Left cardiac atrium (tissue), 4 donors: ENCODE measurements at regions of chr10 and their contacts with region 1.

Region 1: GRCh38 chr10:4656576-4657182 is 169.3 kb upstream of the AKR1E2 start:
- DNase-seq: peak; percentile 50
- ATAC-seq: peak; percentile 37 to 79

Region 2: GRCh38 chr10:3785257-3785850 is 871.3 kb before region 1 on chr10:
- intact Hi-C with region 1: loop called (anchors 10 kb)
- DNase-seq: peak; percentile 99
- ATAC-seq: peak; percentile 82 to 85

Region 3: GRCh38 chr10:4081685-4082111 is 575.0 kb before region 1 on chr10:
- intact Hi-C with region 1: loop called in 1 of 2 experiments (anchors 10 kb)
- DNase-seq: peak; percentile 44
- ATAC-seq: peak; percentile 49 to 50

Region 4: DNA sequence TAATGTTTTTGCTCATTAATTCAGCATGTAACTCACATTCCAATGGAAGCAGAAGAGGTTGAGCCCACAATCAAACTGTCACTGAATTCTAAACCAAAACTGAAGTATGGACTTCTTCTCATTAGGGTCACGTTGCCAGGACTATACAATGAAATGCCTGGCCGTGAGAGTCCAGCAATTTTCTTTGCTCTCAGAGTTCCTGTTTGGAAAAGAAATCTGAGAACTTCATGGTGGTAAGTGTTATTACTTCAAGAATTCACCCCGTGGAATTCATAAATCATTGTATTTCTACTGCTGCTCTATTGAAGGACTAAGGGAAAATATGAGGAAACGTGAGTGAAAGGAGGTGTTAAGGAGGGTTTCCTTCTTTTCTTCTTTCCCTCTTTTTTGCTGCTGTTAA is 272.4 kb before region 1 on chr10:
- intact Hi-C with region 1: no loop called
- DNase-seq: no peak
- ATAC-seq: no peak

Region 5: GRCh38 chr10:4512671-4513240 is 143.9 kb before region 1 on chr10:
- intact Hi-C with region 1: loop called (anchors 5 kb)
- DNase-seq: peak; percentile 62
- ATAC-seq: peak; percentile 78 to 79

Region 6: DNA sequence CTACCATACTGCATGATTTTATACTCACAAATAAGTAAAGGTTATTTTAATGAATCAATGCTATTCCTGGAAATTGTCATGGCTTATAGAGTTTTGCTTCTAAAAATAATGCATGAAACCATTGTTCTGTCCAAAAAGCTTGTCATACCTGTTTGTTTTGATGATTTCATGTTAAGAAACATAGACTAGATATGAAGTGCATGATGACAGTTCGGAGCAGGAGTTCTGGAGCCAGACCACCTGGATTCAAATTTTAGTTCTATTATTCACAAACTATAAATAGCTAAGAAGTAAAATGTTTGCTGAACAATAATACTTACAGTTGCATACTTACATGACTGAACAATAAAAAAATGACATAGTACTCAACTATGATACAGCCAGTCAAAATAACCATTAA is 62.4 kb after region 1 on chr10:
- intact Hi-C with region 1: no loop called
- DNase-seq: no peak
- ATAC-seq: no peak